GM12878 (cell line): ENCODE measurements at regions of chr15 and their contacts with region 1.

Region 1: DNA sequence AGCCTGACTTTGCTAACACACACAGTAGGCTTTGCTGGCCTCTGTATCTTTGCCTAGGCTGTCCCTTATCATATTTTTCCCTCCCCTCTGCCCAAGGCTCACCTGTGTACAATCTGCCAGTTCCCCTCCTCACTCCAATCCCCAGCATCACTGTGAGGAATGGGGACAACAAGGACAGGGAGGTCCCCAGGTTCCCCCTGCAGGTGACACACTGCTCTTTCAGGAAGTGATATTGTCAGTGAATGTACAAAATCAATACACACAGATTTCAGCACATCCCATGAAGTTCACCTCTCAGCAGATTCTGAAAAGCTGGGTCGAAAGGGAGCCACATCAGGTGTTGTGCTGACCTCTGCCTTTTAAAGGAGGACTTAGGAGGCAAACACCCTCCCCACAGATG is 177.5 kb downstream of the RAB11A start:
- DNase-seq: no peak
- ATAC-seq: peak; percentile 72
- H3K4me3 ChIP-seq: no peak overlapping the region
- H3K27ac ChIP-seq: no peak overlapping the region
- H3K4me1 ChIP-seq: no peaks in the 10 kb centered on the region
- H3K27me3 ChIP-seq: peaks cover 0 to 1% of the 10 kb centered on the region in 2 experiments; a peak in 1 of 4 replicates
- CTCF ChIP-seq: peak; percentile 35 to 39 (median 37); a peak in 4 of 6 replicates
- EP300 ChIP-seq: no peak
- POLR2A ChIP-seq: no peak
- RAD21 ChIP-seq: peak; percentile 41; the same call in 1 of the 2 replicates

Region 2: GRCh38 chr15:65766422-65767263 is 280.1 kb before region 1 on chr15:
- CTCF ChIA-PET with region 1: no interaction called
- POLR2A ChIA-PET with region 1: no interaction called
- RAD21 ChIA-PET with region 1: no interaction called
- SMC1A ChIA-PET with region 1: no interaction called
- in situ Hi-C with region 1: no loop called
- intact Hi-C with region 1: no loop called
- DNase-seq: no peak
- ATAC-seq: no peak; the same call in 1 of the 3 replicates
- H3K4me3 ChIP-seq: no peak overlapping the region
- H3K27ac ChIP-seq: no peak overlapping the region
- H3K4me1 ChIP-seq: peaks cover 10% of the 10 kb centered on the region
- H3K27me3 ChIP-seq: no peaks in the 10 kb centered on the region
- CTCF ChIP-seq: no peak
- EP300 ChIP-seq: no peak
- POLR2A ChIP-seq: no peak
- RAD21 ChIP-seq: no peak

Region 3: GRCh38 chr15:65980824-65981456 is 65.8 kb before region 1 on chr15:
- CTCF ChIA-PET with region 1: no interaction called
- POLR2A ChIA-PET with region 1: no interaction called
- RAD21 ChIA-PET with region 1: no interaction called
- SMC1A ChIA-PET with region 1: no interaction called
- in situ Hi-C with region 1: no loop called
- intact Hi-C with region 1: loop called (anchors 1 kb)
- DNase-seq: no peak
- ATAC-seq: peak; percentile 43
- H3K4me3 ChIP-seq: no peak overlapping the region
- H3K27ac ChIP-seq: no peak overlapping the region
- H3K4me1 ChIP-seq: no peaks in the 10 kb centered on the region; the same call in 1 of the 2 replicates
- H3K27me3 ChIP-seq: peaks cover 0 to 1% of the 10 kb centered on the region in 2 experiments; a peak in 1 of 4 replicates
- CTCF ChIP-seq: peak; percentile 53 to 68 (median 56)
- EP300 ChIP-seq: no peak
- POLR2A ChIP-seq: no peak
- RAD21 ChIP-seq: peak; percentile 52

Region 4: GRCh38 chr15:66080717-66081398 is 34.1 kb after region 1 on chr15:
- CTCF ChIA-PET with region 1: no interaction called
- POLR2A ChIA-PET with region 1: no interaction called
- RAD21 ChIA-PET with region 1: no interaction called
- SMC1A ChIA-PET with region 1: no interaction called
- in situ Hi-C with region 1: no loop called
- intact Hi-C with region 1: no loop called
- DNase-seq: no peak
- ATAC-seq: peak; percentile 32; the same call in 2 of the 3 replicates
- H3K4me3 ChIP-seq: no peak overlapping the region
- H3K27ac ChIP-seq: no peak overlapping the region
- H3K4me1 ChIP-seq: no peaks in the 10 kb centered on the region
- H3K27me3 ChIP-seq: no peaks in the 10 kb centered on the region; a peak in 1 of 4 replicates
- CTCF ChIP-seq: 0 out of 6 replicates have a peak, but pooled peaks of 2 of the 3 experiments have one; percentile 0 to 11
- EP300 ChIP-seq: no peak
- POLR2A ChIP-seq: no peak
- RAD21 ChIP-seq: 0 out of 2 replicates have a peak, but pooled peaks have one; percentile 10